Esophagus squamous epithelium (tissue), 5 donors: ENCODE measurements at regions of chr4 and their contacts with region 1.

Region 1: DNA sequence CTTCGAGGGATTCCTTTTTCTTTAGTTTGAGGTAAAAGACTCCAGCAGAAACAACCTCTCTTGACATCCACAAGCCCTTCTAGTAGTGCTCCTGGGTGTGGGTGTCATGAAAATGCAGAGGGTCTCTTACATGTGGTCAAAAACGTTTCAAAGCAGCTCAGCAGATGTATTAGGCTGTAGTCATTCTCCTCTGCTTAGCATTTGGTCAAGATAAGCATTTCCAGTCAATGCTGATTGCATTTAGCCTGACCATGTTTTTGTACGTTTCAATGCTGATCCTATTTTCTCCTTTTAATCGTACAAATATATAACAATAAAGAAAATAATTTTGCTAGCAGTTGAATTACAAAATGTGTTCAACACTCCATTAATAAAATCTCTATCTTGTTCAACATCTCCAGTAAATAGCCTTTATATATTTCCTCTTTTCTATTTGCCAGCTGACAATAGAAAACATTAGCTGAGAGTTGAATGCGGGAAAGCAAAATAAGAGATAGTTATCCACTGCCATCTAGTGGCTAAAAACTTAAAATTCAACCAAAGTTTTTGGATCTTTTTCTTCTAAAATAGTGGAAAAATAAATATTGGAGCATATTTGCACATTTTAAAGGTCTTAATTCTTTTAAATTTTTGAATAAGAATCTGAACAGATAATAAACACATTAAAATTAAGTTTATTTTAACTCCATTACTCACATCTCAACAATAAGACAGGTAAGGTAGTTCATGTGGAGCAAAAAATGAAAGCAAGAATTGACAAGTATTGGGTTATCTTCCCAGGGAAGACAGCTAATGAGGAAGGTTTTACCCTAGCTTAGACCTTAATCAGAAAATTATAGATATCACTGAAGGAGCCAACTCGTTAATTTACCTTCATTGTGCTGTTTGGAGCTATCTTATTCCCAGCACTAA is 15.2 kb upstream of the PACRGL start:
- DNase-seq: no peak
- H3K4me3 ChIP-seq: no peak overlapping the region
- H3K27ac ChIP-seq: no peak overlapping the region
- H3K4me1 ChIP-seq: no peaks in the 10 kb centered on the region
- H3K27me3 ChIP-seq: no peaks in the 10 kb centered on the region
- CTCF ChIP-seq: peak; percentile 9 to 66 (median 46)
- POLR2A ChIP-seq: no peak

Region 2: GRCh38 chr4:18689308-18690115 is 1995.6 kb before region 1 on chr4:
- intact Hi-C with region 1: loop called (anchors 10 kb)
- DNase-seq: no peak
- H3K4me3 ChIP-seq: no peak overlapping the region
- H3K27ac ChIP-seq: no peak overlapping the region
- H3K4me1 ChIP-seq: no peaks in the 10 kb centered on the region
- H3K27me3 ChIP-seq: no peaks in the 10 kb centered on the region
- CTCF ChIP-seq: peak; percentile 37 to 78 (median 68)
- POLR2A ChIP-seq: no peak

Region 3: GRCh38 chr4:20266215-20267082 is 418.7 kb before region 1 on chr4:
- intact Hi-C with region 1: no loop called
- DNase-seq: no peak
- H3K4me3 ChIP-seq: no peak overlapping the region
- H3K27ac ChIP-seq: peak overlapping the region in 2 of 4 donors; percentile 36 to 47
- H3K4me1 ChIP-seq: peaks cover 0 to 9% (median 0%) of the 10 kb centered on the region in 3 donors
- H3K27me3 ChIP-seq: no peaks in the 10 kb centered on the region
- CTCF ChIP-seq: no peak
- POLR2A ChIP-seq: no peak

Region 4: GRCh38 chr4:20422398-20422797 is 262.7 kb before region 1 on chr4:
- intact Hi-C with region 1: loop called (anchors 10 kb)
- DNase-seq: no peak
- H3K4me3 ChIP-seq: no peak overlapping the region
- H3K27ac ChIP-seq: no peak overlapping the region
- H3K4me1 ChIP-seq: peaks cover 0 to 12% (median 0%) of the 10 kb centered on the region in 3 donors
- H3K27me3 ChIP-seq: no peaks in the 10 kb centered on the region
- CTCF ChIP-seq: peak in 4 of 6 experiments; percentile 40 to 58 (median 49)
- POLR2A ChIP-seq: no peak